ENCODE measurements at regions of chr7 and their contacts with region 1.

Region 1: GRCh38 chr7:41097501-41097900 is 605.4 kb downstream of the INHBA start:
- DNase-seq: peak; percentile 82
- H3K4me3 ChIP-seq: no peak overlapping the region
- CTCF ChIP-seq: no peak

Region 2: GRCh38 chr7:41035794-41036193 is 61.7 kb before region 1 on chr7:
- in situ Hi-C with region 1: loop called (anchors 5 kb)
- DNase-seq: no peak
- H3K4me3 ChIP-seq: no peak overlapping the region
- CTCF ChIP-seq: no peak

Region 3: GRCh38 chr7:41134300-41135250 is 37.1 kb after region 1 on chr7:
- in situ Hi-C with region 1: no loop called
- DNase-seq: no peak
- H3K4me3 ChIP-seq: no peak overlapping the region
- CTCF ChIP-seq: no peak